ENCODE measurements at regions of chr2 and their contacts with region 1.

Region 1: GRCh38 chr2:151437630-151438029 is 27.9 kb downstream of the RIF1 start:
- DNase-seq: peak in 1 of 2 experiments; percentile 36
- ATAC-seq: peak in 1 of 2 experiments; percentile 61; a peak in 3 of 6 replicates
- H3K4me3 ChIP-seq: no peak overlapping the region
- H3K27ac ChIP-seq: no peak overlapping the region
- H3K4me1 ChIP-seq: no peaks in the 10 kb centered on the region
- CTCF ChIP-seq: peak; percentile 73
- EP300 ChIP-seq: no peak
- POLR2A ChIP-seq: no peak
- RAD21 ChIP-seq: peak; percentile 17 to 45; a peak in 3 of 5 replicates

Region 2: GRCh38 chr2:151297882-151298281 is 139.7 kb before region 1 on chr2:
- CTCF ChIA-PET with region 1: no interaction called
- POLR2A ChIA-PET with region 1: no interaction called
- DNase-seq: no peak
- ATAC-seq: no peak; a peak in 1 of 6 replicates
- H3K4me3 ChIP-seq: no peak overlapping the region
- H3K27ac ChIP-seq: no peak overlapping the region
- H3K4me1 ChIP-seq: peaks cover 7% of the 10 kb centered on the region
- CTCF ChIP-seq: no peak
- EP300 ChIP-seq: no peak
- POLR2A ChIP-seq: no peak
- RAD21 ChIP-seq: no peak

Region 3: GRCh38 chr2:151374426-151374825 is 63.2 kb before region 1 on chr2:
- CTCF ChIA-PET with region 1: no interaction called
- POLR2A ChIA-PET with region 1: no interaction called
- DNase-seq: peak; percentile 34 to 60
- ATAC-seq: peak; percentile 82 to 85
- H3K4me3 ChIP-seq: no peak overlapping the region
- H3K27ac ChIP-seq: peak overlapping the region; percentile 61 to 73
- H3K4me1 ChIP-seq: peaks cover 14% of the 10 kb centered on the region
- CTCF ChIP-seq: no peak
- EP300 ChIP-seq: no peak
- POLR2A ChIP-seq: no peak
- RAD21 ChIP-seq: no peak

Region 4: GRCh38 chr2:151417650-151418049 is 20.0 kb before region 1 on chr2:
- CTCF ChIA-PET with region 1: interaction called, 10 read pairs
- POLR2A ChIA-PET with region 1: no interaction called
- DNase-seq: no peak
- ATAC-seq: no peak; a peak in 2 of 6 replicates
- H3K4me3 ChIP-seq: no peak overlapping the region
- H3K27ac ChIP-seq: no peak overlapping the region
- H3K4me1 ChIP-seq: no peaks in the 10 kb centered on the region; the same call in 2 of the 3 replicates
- CTCF ChIP-seq: no peak
- EP300 ChIP-seq: no peak
- POLR2A ChIP-seq: no peak
- RAD21 ChIP-seq: no peak

Region 5: DNA sequence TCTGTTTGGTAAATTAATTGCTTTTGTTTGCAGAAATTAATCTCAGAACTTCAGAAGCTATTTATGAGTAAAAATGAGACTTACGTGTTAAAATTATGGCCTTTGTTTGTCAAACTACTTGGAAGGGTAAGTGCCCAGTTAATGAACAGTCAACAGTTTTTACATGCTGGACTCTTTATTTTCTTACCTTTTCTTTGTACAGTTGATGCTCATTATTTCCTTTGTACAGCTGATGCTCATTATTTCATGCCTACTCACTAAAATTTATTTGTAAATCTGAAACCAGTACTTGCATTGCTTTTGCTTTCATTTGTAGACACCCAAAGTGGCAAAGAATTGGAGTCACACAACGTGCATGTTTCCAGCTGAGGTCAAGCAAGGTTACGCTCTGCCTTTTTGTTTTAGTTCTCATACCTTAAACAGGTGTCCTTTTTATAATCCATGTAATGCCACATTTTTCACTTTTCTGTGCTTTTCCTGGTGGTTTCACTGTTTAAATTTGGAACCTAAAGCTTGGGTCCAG is 14.7 kb before region 1 on chr2:
- CTCF ChIA-PET with region 1: interaction called, 17 read pairs
- POLR2A ChIA-PET with region 1: no interaction called
- DNase-seq: no peak
- ATAC-seq: no peak
- H3K4me3 ChIP-seq: no peak overlapping the region
- H3K27ac ChIP-seq: 0 out of 6 replicates have a peak overlapping the region, but pooled peaks of 1 of the 2 experiments have one; percentile 36
- H3K4me1 ChIP-seq: peaks cover 13% of the 10 kb centered on the region
- CTCF ChIP-seq: no peak
- EP300 ChIP-seq: no peak
- POLR2A ChIP-seq: no peak
- RAD21 ChIP-seq: no peak